T-cell (primary cell): ENCODE measurements at regions of chr15 and their contacts with region 1.

Region 1: GRCh38 chr15:68875377-68876116 is 54.8 kb upstream of the SPESP1 start:
- DNase-seq: peak; percentile 73 to 95 (median 89)
- ATAC-seq: peak; percentile 73 to 86 (median 80)
- H3K4me3 ChIP-seq: peak overlapping the region in 1 of 2 donors; percentile 41
- H3K4me3 Mint-ChIP-seq: no peak overlapping the region
- H3K27ac ChIP-seq: no peak overlapping the region
- H3K27ac Mint-ChIP-seq: no peak overlapping the region
- H3K4me1 ChIP-seq: peaks cover 0 to 8% of the 10 kb centered on the region in 2 experiments
- H3K4me1 Mint-ChIP-seq: peaks cover 0 to 5% (median 3%) of the 10 kb centered on the region in 3 donors
- H3K27me3 ChIP-seq: peaks cover 0 to 19% of the 10 kb centered on the region in 2 experiments
- H3K27me3 Mint-ChIP-seq: peaks cover 18 to 20% of the 10 kb centered on the region in 2 donors

Region 2: DNA sequence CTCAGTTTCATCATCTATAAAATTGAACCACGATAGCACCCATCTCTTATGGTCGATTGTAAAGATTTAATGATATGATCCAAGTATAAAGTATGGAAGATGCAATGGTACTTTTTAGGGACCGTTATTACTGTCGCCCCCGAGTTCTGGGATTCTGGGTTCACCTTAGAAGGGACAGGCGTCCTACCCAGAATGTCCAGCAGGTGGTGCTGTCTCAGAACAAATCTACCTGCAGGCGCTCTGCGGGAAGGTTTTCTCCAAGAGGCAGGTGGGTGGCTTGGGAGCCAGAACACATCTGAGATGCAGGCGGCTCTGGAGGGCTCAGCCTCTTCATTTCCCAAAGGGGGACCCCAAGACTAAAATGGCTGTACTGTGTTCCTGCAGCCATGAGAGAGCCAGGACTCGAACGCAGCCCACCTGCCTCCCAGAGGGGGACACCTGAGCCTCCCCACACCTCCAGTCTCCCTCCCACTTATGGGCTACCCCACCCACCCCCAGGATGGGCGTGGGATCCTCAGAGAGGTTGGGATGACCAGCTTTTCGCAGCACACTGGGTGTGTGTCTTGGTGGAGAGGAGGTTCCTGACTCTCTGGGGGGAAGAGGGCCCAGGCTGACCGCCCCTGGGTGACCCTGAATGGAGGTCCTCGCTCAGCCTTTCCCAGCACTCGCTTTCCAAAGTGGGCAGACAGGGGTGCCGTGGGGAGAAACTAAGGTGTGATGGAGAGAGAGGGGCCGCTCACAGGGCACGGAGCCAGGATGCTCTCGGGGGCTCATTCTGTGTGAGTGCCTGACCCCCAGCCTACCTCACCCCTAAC is 324.9 kb before region 1 on chr15:
- CTCF ChIA-PET with region 1: interaction called, 8 to 10 read pairs
- POLR2A ChIA-PET with region 1: no interaction called
- DNase-seq: peak; percentile 30 to 80 (median 60)
- ATAC-seq: peak in 3 of 4 experiments; percentile 31 to 66 (median 49)
- H3K4me3 ChIP-seq: no peak overlapping the region
- H3K4me3 Mint-ChIP-seq: no peak overlapping the region
- H3K27ac ChIP-seq: no peak overlapping the region
- H3K27ac Mint-ChIP-seq: no peak overlapping the region
- H3K4me1 ChIP-seq: no peaks in the 10 kb centered on the region
- H3K4me1 Mint-ChIP-seq: no peaks in the 10 kb centered on the region
- H3K27me3 ChIP-seq: peaks cover 0 to 55% of the 10 kb centered on the region in 2 experiments
- H3K27me3 Mint-ChIP-seq: peaks cover 38% of the 10 kb centered on the region in 2 donors

Region 3: GRCh38 chr15:68559345-68560310 is 315.9 kb before region 1 on chr15:
- CTCF ChIA-PET with region 1: interaction called, 3 to 16 read pairs
- POLR2A ChIA-PET with region 1: no interaction called
- DNase-seq: peak; percentile 23 to 81 (median 64)
- ATAC-seq: peak; percentile 86 to 96 (median 89)
- H3K4me3 ChIP-seq: peak overlapping the region; percentile 31 to 35
- H3K4me3 Mint-ChIP-seq: peak overlapping the region; percentile 72 to 84 (median 77)
- H3K27ac ChIP-seq: no peak overlapping the region
- H3K27ac Mint-ChIP-seq: no peak overlapping the region
- H3K4me1 ChIP-seq: peaks cover 3 to 18% of the 10 kb centered on the region in 2 experiments
- H3K4me1 Mint-ChIP-seq: peaks cover 14 to 23% (median 21%) of the 10 kb centered on the region in 3 donors
- H3K27me3 ChIP-seq: peaks cover 0 to 63% of the 10 kb centered on the region in 2 experiments
- H3K27me3 Mint-ChIP-seq: peaks cover 51 to 58% of the 10 kb centered on the region in 2 donors

Region 4: DNA sequence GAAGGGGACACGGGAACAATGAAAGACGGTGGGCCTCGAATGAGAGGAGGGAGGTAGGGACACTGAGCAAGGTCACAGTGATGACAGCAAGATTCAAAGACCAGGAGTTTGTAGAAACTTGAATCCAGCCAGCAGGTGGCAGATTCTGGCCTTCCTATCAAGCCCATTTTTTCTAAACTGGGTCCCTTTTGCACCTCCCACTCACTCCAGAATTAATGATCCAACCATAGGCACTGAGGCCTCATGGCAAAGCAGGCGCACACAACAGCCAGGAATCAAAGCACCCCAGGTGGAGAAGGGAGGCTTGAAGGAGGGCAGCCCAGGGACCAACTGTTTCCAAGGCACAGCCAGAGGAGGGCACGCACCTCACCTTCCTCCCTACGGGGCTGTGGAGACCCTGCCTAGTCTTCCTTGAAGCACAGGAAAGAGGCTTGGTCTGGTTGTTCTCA is 145.1 kb before region 1 on chr15:
- CTCF ChIA-PET with region 1: interaction called, 3 to 13 read pairs
- POLR2A ChIA-PET with region 1: no interaction called
- DNase-seq: peak in 19 of 35 experiments; percentile 4 to 56 (median 13)
- ATAC-seq: no peak
- H3K4me3 ChIP-seq: no peak overlapping the region
- H3K4me3 Mint-ChIP-seq: no peak overlapping the region
- H3K27ac ChIP-seq: no peak overlapping the region
- H3K27ac Mint-ChIP-seq: no peak overlapping the region
- H3K4me1 ChIP-seq: no peaks in the 10 kb centered on the region
- H3K4me1 Mint-ChIP-seq: peaks cover 0 to 7% (median 5%) of the 10 kb centered on the region in 3 donors
- H3K27me3 ChIP-seq: peaks cover 0 to 28% of the 10 kb centered on the region in 2 experiments
- H3K27me3 Mint-ChIP-seq: peaks cover 0 to 4% of the 10 kb centered on the region in 2 donors

Region 5: GRCh38 chr15:68783226-68784058 is 92.1 kb before region 1 on chr15:
- CTCF ChIA-PET with region 1: interaction called, 19 to 30 read pairs
- POLR2A ChIA-PET with region 1: no interaction called
- DNase-seq: peak; percentile 24 to 82 (median 64)
- ATAC-seq: peak; percentile 68 to 94 (median 80)
- H3K4me3 ChIP-seq: no peak overlapping the region
- H3K4me3 Mint-ChIP-seq: peak overlapping the region in 1 of 3 donors; percentile 49
- H3K27ac ChIP-seq: no peak overlapping the region
- H3K27ac Mint-ChIP-seq: peak overlapping the region; percentile 81 to 90
- H3K4me1 ChIP-seq: peaks cover 13 to 30% of the 10 kb centered on the region in 2 experiments
- H3K4me1 Mint-ChIP-seq: peaks cover 28 to 37% (median 34%) of the 10 kb centered on the region in 3 donors
- H3K27me3 ChIP-seq: no peaks in the 10 kb centered on the region
- H3K27me3 Mint-ChIP-seq: no peaks in the 10 kb centered on the region